ENCODE measurements at regions of chr21 and their contacts with region 1.

Region 1: GRCh38 chr21:35885942-35886541 is 174.3 kb downstream of the SETD4 start:
- DNase-seq: no peak
- ATAC-seq: no peak
- H3K4me3 ChIP-seq: no peak overlapping the region
- H3K27ac ChIP-seq: no peak overlapping the region
- H3K4me1 ChIP-seq: no peaks in the 10 kb centered on the region
- H3K27me3 ChIP-seq: no peaks in the 10 kb centered on the region
- CTCF ChIP-seq: no peak

Region 2: GRCh38 chr21:35603494-35603893 is 282.5 kb before region 1 on chr21:
- CTCF ChIA-PET with region 1: no interaction called
- POLR2A ChIA-PET with region 1: interaction called, 12 read pairs
- in situ Hi-C with region 1: no loop called
- intact Hi-C with region 1: no loop called
- DNase-seq: no peak
- ATAC-seq: no peak
- H3K4me3 ChIP-seq: no peak overlapping the region
- H3K27ac ChIP-seq: no peak overlapping the region
- H3K4me1 ChIP-seq: no peaks in the 10 kb centered on the region
- H3K27me3 ChIP-seq: peaks cover 7% of the 10 kb centered on the region
- CTCF ChIP-seq: no peak

Measured in Panc1 (cell line).